Activated CD4-positive, alpha-beta memory T cell treated with anti-CD3 and anti-CD28 coated beads, Interleukin-2, amount 10 ng/mL, durations not matched to agents 7 days and 5 days (primary cell): ENCODE measurements at regions of chr4 and their contacts with region 1.

Region 1: DNA sequence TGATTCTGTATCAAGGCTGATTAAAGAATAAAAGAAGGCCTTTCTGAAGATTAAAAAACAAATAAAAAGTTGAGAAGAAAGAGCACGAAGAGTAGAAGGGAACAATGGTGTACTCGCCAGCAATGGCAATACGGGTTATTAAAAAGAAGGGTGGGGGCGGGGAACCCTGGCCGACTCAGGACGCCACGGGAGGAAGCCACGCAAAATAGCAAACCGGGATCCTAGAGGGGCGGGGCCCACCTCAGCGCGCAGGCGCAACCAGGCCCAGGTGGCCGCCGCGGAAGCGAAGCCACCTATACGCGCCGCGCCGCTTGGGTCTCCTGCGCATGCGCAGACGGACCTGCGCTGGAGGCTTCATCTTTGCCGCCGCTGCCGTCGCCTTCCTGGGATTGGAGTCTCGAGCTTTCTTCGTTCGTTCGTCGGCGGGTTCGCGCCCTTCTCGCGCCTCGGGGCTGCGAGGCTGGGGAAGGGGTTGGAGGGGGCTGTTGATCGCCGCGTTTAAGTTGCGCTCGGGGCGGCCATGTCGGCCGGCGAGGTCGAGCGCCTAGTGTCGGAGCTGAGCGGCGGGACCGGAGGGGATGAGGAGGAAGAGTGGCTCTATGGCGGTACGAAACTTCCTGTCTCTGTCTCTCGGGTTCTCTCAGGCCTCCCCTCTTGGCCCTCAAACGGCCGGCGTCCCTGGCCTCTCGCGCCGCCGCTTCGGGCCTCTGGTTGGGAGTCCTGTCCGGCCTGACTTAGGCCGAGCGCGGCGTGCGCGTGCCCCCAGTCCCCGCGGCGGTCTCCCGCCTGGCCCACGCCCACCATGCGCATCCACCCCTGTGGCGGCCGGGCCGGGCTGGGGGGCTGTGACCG is at the start of gene FIP1L1:
- DNase-seq: peak; percentile 96
- H3K4me3 Mint-ChIP-seq: peak within 1 kb of the TSS; percentile 98
- H3K27ac Mint-ChIP-seq: peak within 1 kb of the TSS; percentile 94
- H3K4me1 Mint-ChIP-seq: peaks cover 33% of the 10 kb centered on the region
- H3K27me3 Mint-ChIP-seq: peaks cover 8% of the 10 kb centered on the region
- total RNA-seq, gene FIP1L1: 74.5 to 76.2 TPM

Region 2: DNA sequence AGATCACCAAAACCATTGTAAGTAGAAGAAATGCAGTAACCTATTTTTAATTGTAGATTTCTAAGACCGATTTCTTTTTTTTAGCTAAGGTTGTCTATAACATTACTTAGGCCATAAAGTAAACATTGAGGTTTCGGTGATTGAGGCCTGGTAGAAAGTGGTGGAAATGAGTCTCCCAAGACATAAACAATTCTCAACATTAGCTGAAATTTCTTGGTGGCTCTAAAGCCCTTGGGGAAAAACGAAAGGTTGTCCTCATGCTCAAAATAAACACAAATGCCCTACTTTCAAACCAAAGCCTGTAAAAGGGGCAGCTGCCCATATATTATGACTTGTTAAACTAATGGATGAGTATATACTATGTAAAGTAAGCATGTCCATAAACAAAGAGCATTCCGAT is 110.5 kb before region 1 on chr4:
- CTCF ChIA-PET with region 1: no interaction called
- POLR2A ChIA-PET with region 1: no interaction called
- DNase-seq: no peak
- H3K4me3 Mint-ChIP-seq: no peak overlapping the region
- H3K27ac Mint-ChIP-seq: no peak overlapping the region
- H3K4me1 Mint-ChIP-seq: no peaks in the 10 kb centered on the region
- H3K27me3 Mint-ChIP-seq: no peaks in the 10 kb centered on the region

Region 3: DNA sequence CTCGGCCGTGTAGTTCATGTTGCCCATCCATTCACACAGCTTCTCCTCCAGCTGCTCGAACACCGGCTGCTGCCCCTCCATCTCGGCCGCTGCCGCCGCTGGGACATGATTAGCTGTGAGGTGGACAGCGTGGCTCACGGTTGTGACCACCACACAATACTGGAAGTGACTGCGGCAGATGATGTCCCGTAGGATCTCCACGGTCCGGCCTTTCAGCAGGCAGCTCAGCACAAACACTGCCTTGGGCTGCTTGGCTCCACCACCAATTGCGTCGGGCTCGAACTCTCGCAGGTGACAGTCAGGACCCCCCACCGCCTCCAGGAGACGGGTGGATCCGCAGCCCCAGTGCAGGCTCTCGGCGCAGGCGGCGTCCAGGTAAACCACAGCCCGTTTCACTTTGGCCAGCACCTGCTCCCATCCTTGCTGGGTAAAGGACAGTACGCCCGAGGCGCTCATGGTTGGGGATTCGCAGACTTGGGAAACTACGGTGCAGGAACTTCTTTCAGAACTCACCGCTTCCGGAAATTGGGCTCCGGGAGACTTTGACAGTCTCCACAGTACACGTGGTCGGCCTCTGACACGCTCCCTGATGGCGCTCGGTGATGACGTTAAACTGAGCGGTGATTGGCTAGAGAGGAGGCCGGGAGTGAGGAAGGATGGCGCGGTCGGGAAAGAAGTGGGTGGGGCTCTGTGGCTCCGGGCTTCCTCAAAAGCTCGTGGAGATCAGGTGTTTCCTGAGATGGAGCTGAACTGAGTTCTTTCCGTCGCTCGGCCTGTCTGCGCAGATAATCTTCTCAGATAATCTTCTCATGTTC is 11.9 kb before region 1 on chr4 and contains the start of gene SCFD2:
- CTCF ChIA-PET with region 1: no interaction called
- POLR2A ChIA-PET with region 1: interaction called, 32 read pairs
- DNase-seq: peak; percentile 98
- H3K4me3 Mint-ChIP-seq: peak within 1 kb of the TSS; percentile 91
- H3K27ac Mint-ChIP-seq: peak within 1 kb of the TSS; percentile 91
- H3K4me1 Mint-ChIP-seq: peaks cover 44% of the 10 kb centered on the region
- H3K27me3 Mint-ChIP-seq: peaks cover 23% of the 10 kb centered on the region
- total RNA-seq, gene SCFD2: 12.6 to 14.6 TPM